Activated naive CD4-positive, alpha-beta T cell treated with anti-CD3 and anti-CD28 coated beads for 36 hours (primary cell): ENCODE measurements at regions of chr2 and their contacts with region 1.

Region 1: DNA sequence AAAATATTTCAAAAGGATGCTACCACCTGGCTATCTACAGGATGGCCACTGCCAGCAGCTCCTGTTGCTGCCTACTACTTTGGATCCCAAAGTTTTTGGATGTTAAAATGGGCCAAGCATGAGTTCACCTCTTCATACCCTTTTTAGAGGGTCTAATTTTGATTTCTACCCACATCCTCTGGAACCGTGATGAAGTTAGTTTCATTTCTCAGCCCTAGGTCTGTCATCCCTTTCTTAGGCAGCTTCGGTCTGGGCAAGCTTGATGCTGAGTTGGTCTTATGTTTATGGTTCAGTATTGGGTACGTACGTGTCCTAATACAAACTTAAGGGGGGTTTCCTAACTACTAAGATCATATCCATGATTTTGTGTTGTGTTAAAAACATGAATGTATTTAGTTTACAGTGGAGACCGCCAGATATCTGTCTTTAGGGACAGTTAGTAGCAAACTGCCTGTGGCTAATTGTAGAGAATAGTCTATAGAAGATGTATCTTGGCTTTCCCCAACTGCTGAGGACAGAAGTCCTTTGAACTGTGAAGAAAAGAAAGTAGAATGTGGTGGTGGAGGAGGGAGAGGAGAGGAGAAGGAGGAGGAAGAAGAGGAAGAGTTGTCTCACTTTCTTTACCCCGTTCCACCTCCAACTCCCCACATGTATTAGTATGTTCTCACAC is 184.9 kb downstream of the UBE2E3 start:
- DNase-seq: peak; percentile 36
- H3K4me3 Mint-ChIP-seq: peak overlapping the region; percentile 54
- H3K27ac Mint-ChIP-seq: peak overlapping the region; percentile 90
- H3K4me1 Mint-ChIP-seq: peaks cover 53% of the 10 kb centered on the region
- H3K27me3 Mint-ChIP-seq: no peaks in the 10 kb centered on the region

Region 2: DNA sequence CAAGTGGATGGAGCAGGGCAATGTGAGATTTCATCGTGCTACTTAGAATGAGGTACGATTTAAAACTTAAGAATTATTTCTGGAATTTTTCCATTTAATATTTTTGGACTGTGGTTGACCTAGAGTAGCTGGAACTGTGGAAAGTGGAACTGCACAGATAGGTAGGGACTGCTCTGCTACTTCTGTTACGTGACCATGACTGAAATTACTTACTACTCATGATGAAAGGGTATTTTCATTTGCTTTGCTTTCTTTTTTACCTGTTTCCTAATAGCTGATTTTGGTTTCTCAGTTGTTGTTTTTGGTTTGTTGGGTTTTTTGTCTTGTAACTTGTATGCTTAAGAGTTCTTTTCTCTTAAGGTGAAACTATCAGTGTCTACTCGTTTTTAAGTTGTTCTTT is 173.5 kb before region 1 on chr2:
- CTCF ChIA-PET with region 1: no interaction called
- intact Hi-C with region 1: no loop called
- DNase-seq: no peak
- H3K4me3 Mint-ChIP-seq: no peak overlapping the region
- H3K27ac Mint-ChIP-seq: no peak overlapping the region
- H3K4me1 Mint-ChIP-seq: peaks cover 24% of the 10 kb centered on the region
- H3K27me3 Mint-ChIP-seq: no peaks in the 10 kb centered on the region

Region 3: DNA sequence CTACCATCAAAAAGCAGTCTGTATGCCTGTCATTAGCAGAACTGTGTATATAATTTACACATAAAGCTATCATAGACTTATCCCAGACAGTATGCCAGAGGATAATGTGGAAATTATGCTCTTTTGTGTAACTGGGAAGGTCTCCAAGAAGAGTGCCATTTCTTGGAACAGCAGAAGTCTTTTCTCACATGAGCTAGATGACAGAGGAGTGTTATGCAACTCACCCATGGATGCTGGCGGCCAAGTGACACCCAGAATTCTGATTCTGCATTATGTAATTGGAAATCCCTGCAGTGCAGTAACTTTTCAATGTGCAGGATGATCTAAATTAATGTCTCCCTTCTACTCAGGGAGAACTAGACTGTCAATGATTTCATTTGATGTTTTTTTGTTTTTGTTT is 24.9 kb before region 1 on chr2:
- CTCF ChIA-PET with region 1: interaction called, 4 read pairs
- intact Hi-C with region 1: loop called (anchors 2 kb)
- DNase-seq: no peak
- H3K4me3 Mint-ChIP-seq: peak overlapping the region; percentile 68
- H3K27ac Mint-ChIP-seq: peak overlapping the region; percentile 65
- H3K4me1 Mint-ChIP-seq: peaks cover 63% of the 10 kb centered on the region
- H3K27me3 Mint-ChIP-seq: no peaks in the 10 kb centered on the region

Region 4: DNA sequence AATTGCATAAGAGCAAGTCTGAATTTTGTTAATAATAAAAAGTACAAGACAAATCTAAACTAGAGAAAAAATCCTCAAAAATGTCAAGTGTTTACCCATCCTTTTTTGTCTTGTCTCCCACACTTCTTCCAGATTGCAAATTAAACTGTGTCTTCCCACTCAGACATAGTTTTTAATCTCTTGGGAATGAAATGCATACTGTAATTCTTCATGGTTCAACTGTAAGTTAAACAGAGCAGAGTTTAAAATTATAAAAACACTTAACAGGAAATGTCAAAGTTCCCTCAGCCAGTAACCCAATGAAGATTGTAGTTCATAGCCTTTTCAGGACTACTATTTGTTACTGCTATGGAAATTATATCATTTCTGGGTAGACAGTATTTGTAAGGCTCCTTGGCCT is 13.1 kb before region 1 on chr2:
- CTCF ChIA-PET with region 1: interaction called, 5 read pairs
- intact Hi-C with region 1: loop called (anchors 1 kb)
- DNase-seq: no peak
- H3K4me3 Mint-ChIP-seq: peak overlapping the region; percentile 28
- H3K27ac Mint-ChIP-seq: no peak overlapping the region
- H3K4me1 Mint-ChIP-seq: peaks cover 38% of the 10 kb centered on the region
- H3K27me3 Mint-ChIP-seq: no peaks in the 10 kb centered on the region

Region 5: GRCh38 chr2:181190711-181191110 is 25.4 kb after region 1 on chr2:
- CTCF ChIA-PET with region 1: no interaction called
- intact Hi-C with region 1: loop called (anchors 2 kb)
- DNase-seq: no peak
- H3K4me3 Mint-ChIP-seq: no peak overlapping the region
- H3K27ac Mint-ChIP-seq: no peak overlapping the region
- H3K4me1 Mint-ChIP-seq: peaks cover 24% of the 10 kb centered on the region
- H3K27me3 Mint-ChIP-seq: no peaks in the 10 kb centered on the region